CD14-positive monocyte (primary cell): ENCODE measurements at regions of chr11 and their contacts with region 1.

Region 1: GRCh38 chr11:11458485-11458884 is 105.4 kb upstream of the CSNK2A3 start:
- DNase-seq: no peak
- H3K4me3 ChIP-seq: no peak overlapping the region
- H3K4me3 Mint-ChIP-seq: no peak overlapping the region
- H3K27ac ChIP-seq: no peak overlapping the region
- H3K27ac Mint-ChIP-seq: peak overlapping the region in 1 of 7 donors; percentile 11
- H3K4me1 ChIP-seq: no peaks in the 10 kb centered on the region
- H3K4me1 Mint-ChIP-seq: no peaks in the 10 kb centered on the region
- H3K27me3 ChIP-seq: no peaks in the 10 kb centered on the region
- H3K27me3 Mint-ChIP-seq: peaks cover 0 to 15% (median 4%) of the 10 kb centered on the region in 3 donors
- CTCF ChIP-seq: no peak

Region 2: DNA sequence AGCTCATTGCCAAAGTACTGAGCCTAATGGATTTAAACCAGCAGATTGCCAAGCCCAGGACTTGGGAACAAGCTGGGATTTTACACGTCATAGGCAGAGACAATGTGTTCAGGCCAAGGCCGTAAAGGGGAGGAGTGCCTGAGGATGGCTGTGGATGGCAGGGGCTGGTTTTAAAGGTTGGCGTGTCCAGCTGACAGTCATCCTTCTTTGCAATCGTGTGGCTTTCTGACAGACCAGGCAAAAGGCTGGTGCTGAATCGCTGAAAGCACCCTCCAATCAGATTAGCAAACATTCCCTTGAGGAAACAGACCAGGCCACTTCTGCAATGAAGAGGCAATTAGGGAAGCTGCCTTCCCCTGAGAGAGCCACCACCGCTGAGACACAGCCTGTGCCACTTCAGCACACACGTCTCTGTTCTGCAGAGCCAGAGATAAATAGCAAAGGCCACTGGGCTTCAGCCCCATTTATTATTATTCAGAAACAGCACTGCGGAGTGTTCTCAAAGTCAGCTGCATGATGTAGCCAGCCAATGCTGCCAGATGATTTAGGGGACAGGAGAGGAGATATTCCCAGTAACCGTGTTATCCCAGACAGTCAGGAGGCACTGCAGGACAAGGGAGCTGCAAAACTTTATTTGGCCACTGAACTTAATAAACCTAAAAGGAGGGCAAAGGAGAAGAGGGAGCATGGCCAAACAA is 51.3 kb before region 1 on chr11:
- intact Hi-C with region 1: no loop called
- DNase-seq: no peak
- H3K4me3 ChIP-seq: no peak overlapping the region
- H3K4me3 Mint-ChIP-seq: peak overlapping the region in 1 of 2 donors; percentile 51
- H3K27ac ChIP-seq: no peak overlapping the region
- H3K27ac Mint-ChIP-seq: no peak overlapping the region
- H3K4me1 ChIP-seq: no peaks in the 10 kb centered on the region
- H3K4me1 Mint-ChIP-seq: no peaks in the 10 kb centered on the region
- H3K27me3 ChIP-seq: peaks cover 12 to 60% of the 10 kb centered on the region in 2 donors
- H3K27me3 Mint-ChIP-seq: peaks cover 39 to 87% (median 71%) of the 10 kb centered on the region in 3 donors
- CTCF ChIP-seq: no peak

Region 3: DNA sequence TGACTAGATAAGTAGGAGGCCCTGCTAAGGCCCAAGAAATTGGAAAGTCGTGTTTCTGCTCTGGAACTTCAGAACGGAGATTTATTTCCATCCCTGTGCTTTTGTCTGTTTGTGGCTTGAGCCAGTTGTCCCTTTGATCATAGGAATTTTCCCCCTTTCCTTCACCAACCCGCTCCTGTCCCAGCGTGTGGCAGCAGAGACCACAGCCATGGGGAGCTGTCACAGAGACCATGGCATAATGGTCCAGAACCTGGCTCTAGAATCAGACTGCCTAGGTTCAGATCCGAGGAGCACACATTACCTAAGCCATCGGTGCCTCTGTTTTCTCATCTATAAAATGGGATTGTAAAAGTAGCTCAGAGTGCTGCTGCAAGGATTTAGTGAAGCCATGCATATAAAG is 35.2 kb after region 1 on chr11:
- intact Hi-C with region 1: loop called in 1 of 2 experiments (anchors 2 kb)
- DNase-seq: no peak
- H3K4me3 ChIP-seq: no peak overlapping the region
- H3K4me3 Mint-ChIP-seq: no peak overlapping the region
- H3K27ac ChIP-seq: no peak overlapping the region
- H3K27ac Mint-ChIP-seq: no peak overlapping the region
- H3K4me1 ChIP-seq: no peaks in the 10 kb centered on the region
- H3K4me1 Mint-ChIP-seq: no peaks in the 10 kb centered on the region
- H3K27me3 ChIP-seq: no peaks in the 10 kb centered on the region
- H3K27me3 Mint-ChIP-seq: peaks cover 2 to 8% (median 8%) of the 10 kb centered on the region in 3 donors
- CTCF ChIP-seq: no peak

Region 4: GRCh38 chr11:12008790-12009616 is 550.5 kb after region 1 on chr11:
- intact Hi-C with region 1: no loop called
- DNase-seq: no peak
- H3K4me3 ChIP-seq: no peak overlapping the region
- H3K4me3 Mint-ChIP-seq: peak overlapping the region; percentile 39 to 82
- H3K27ac ChIP-seq: no peak overlapping the region
- H3K27ac Mint-ChIP-seq: no peak overlapping the region
- H3K4me1 ChIP-seq: no peaks in the 10 kb centered on the region
- H3K4me1 Mint-ChIP-seq: peaks cover 5% of the 10 kb centered on the region
- H3K27me3 ChIP-seq: peaks cover 59 to 80% of the 10 kb centered on the region in 2 donors
- H3K27me3 Mint-ChIP-seq: peaks cover 68 to 83% (median 76%) of the 10 kb centered on the region in 3 donors
- CTCF ChIP-seq: no peak